Left colon (tissue), 2 donors: ENCODE measurements at regions of chr4 and their contacts with region 1.

Region 1: GRCh38 chr4:15238720-15239119 is 189.1 kb upstream of the C1QTNF7 start:
- DNase-seq: no peak
- ATAC-seq: peak; percentile 67

Region 2: GRCh38 chr4:15457406-15458201 is 218.9 kb after region 1 on chr4:
- intact Hi-C with region 1: loop called (anchors 5 kb)
- DNase-seq: no peak
- ATAC-seq: peak; percentile 66

Region 3: DNA sequence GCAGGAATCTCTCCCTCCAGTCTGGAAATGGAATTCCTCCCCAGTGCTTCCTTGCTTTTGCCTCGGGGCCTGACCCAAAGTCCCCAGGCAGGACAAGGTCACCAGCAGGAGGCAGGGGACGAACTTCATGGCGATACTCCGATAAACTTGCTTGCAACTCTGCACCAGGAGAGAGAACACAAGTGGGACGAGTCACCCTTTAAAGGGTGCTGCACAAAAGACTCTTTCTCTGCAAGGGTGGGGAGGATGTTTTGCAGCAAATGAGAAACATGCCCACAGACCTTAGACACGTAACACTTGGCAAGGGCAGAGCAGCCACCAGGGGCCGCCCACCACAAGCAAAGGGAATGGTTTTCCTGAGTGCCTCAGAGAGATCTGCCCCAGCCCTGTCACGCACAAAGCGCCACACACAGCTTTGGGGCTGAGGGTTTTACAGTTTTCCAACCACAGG is 724.3 kb after region 1 on chr4 and contains the start of gene FGFBP2:
- intact Hi-C with region 1: no loop called
- DNase-seq: peak; percentile 49 to 79
- ATAC-seq: peak; percentile 93
- total RNA-seq, gene FGFBP2: 0.49 to 0.75 TPM